Naive thymus-derived CD4-positive, alpha-beta T cell (primary cell): ENCODE measurements at regions of chr7 and their contacts with region 1.

Region 1: DNA sequence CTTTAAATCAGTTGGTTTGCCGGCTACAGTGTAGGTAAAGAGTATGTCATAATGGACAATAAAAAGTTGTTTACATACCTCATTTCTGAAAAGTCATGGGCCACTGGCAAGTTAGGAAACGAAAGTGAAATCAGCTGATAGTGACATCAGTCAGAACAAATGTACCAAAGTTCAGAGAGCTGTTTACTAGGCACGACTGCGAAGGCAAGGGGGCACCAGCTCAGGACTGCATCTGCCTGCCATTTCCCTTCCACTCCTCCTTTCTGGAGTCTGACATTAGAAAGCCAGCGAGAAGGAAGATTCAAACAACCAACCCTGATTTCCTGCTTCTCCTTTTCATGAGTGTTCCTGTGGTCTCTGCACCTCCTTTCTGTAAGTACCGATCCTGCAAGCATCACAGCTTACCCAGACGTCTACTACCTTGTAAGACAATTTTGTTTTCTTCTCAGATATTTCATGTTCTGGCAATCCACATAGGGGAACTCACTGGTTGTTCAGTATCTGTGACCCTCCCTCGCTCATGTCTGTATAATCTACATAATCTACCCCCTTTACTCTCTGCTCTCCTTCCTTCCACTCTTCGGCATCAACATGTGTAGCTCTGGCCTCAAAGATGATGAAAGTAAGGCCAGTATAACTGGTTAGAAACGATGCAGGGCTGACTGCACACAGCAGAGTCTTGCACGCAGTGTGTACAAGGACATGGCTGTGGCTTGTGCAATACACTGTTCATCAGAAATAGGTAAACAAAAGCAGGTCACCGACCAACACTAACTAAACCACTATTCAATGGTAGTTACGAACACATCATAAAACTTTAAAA is at the start of gene TMEM140:
- DNase-seq: peak in 8 of 9 donors; percentile 56 to 88 (median 80)
- ATAC-seq: peak; percentile 84
- H3K4me3 ChIP-seq: peak within 1 kb of the TSS; percentile 71
- H3K4me3 Mint-ChIP-seq: peak within 1 kb of the TSS; percentile 83 to 95 (median 92)
- H3K27ac ChIP-seq: peak within 1 kb of the TSS; percentile 90
- H3K27ac Mint-ChIP-seq: peak within 1 kb of the TSS; percentile 93 to 99 (median 97)
- H3K4me1 ChIP-seq: peaks cover 31 to 38% of the 10 kb centered on the region in 2 donors
- H3K4me1 Mint-ChIP-seq: peaks cover 41 to 74% (median 70%) of the 10 kb centered on the region in 7 donors
- H3K27me3 ChIP-seq: no peaks in the 10 kb centered on the region
- H3K27me3 Mint-ChIP-seq: no peaks in the 10 kb centered on the region
- total RNA-seq, gene TMEM140: 17.8 to 44.7 (median 20.4) TPM

Region 2: DNA sequence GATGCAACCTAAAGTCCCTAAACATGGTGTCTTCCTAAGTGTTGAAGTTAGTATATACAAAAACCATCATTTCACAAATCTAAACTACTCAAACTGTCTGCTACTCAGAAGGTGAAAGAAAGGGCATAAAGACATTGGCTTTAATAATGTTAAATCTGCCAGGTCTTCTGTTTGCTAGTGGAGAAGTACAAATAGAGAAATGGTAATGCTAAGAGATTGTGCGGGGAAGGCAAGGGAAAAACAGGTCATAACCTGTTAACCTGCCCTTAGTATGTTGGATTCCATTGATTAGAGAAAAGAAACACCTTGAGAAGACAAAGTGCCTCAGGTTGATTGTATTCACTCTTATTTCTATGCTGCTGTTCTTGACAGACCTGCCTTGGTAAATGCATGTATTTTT is 288.3 kb before region 1 on chr7:
- CTCF ChIA-PET with region 1: no interaction called
- POLR2A ChIA-PET with region 1: interaction called, 5 read pairs
- intact Hi-C with region 1: loop called in 1 of 2 experiments (anchors 5 kb)
- DNase-seq: no peak
- ATAC-seq: no peak
- H3K4me3 ChIP-seq: no peak overlapping the region
- H3K4me3 Mint-ChIP-seq: peak overlapping the region in 1 of 10 donors; percentile 9
- H3K27ac ChIP-seq: no peak overlapping the region
- H3K27ac Mint-ChIP-seq: peak overlapping the region in 6 of 9 donors; percentile 9 to 85 (median 58)
- H3K4me1 ChIP-seq: peaks cover 0 to 19% of the 10 kb centered on the region in 2 donors
- H3K4me1 Mint-ChIP-seq: peaks cover 12 to 77% (median 69%) of the 10 kb centered on the region in 7 donors
- H3K27me3 ChIP-seq: no peaks in the 10 kb centered on the region
- H3K27me3 Mint-ChIP-seq: no peaks in the 10 kb centered on the region

Region 3: GRCh38 chr7:134986363-134987251 is 161.5 kb before region 1 on chr7 and contains the start of gene AGBL3:
- CTCF ChIA-PET with region 1: interaction called, 31 read pairs
- POLR2A ChIA-PET with region 1: interaction called, 59 read pairs
- intact Hi-C with region 1: loop called (anchors 1 kb)
- DNase-seq: peak; percentile 80 to 92 (median 89)
- ATAC-seq: peak; percentile 94
- H3K4me3 ChIP-seq: peak within 1 kb of the TSS; percentile 92
- H3K4me3 Mint-ChIP-seq: peak within 1 kb of the TSS; percentile 93 to 100 (median 98)
- H3K27ac ChIP-seq: peak within 1 kb of the TSS; percentile 96
- H3K27ac Mint-ChIP-seq: peak within 1 kb of the TSS; percentile 97 to 100 (median 99)
- H3K4me1 ChIP-seq: no peaks in the 10 kb centered on the region
- H3K4me1 Mint-ChIP-seq: peaks cover 20 to 61% (median 52%) of the 10 kb centered on the region in 7 donors
- H3K27me3 ChIP-seq: no peaks in the 10 kb centered on the region
- H3K27me3 Mint-ChIP-seq: no peaks in the 10 kb centered on the region
- total RNA-seq, gene AGBL3: 2.1 to 6.6 (median 3.8) TPM

Region 4: DNA sequence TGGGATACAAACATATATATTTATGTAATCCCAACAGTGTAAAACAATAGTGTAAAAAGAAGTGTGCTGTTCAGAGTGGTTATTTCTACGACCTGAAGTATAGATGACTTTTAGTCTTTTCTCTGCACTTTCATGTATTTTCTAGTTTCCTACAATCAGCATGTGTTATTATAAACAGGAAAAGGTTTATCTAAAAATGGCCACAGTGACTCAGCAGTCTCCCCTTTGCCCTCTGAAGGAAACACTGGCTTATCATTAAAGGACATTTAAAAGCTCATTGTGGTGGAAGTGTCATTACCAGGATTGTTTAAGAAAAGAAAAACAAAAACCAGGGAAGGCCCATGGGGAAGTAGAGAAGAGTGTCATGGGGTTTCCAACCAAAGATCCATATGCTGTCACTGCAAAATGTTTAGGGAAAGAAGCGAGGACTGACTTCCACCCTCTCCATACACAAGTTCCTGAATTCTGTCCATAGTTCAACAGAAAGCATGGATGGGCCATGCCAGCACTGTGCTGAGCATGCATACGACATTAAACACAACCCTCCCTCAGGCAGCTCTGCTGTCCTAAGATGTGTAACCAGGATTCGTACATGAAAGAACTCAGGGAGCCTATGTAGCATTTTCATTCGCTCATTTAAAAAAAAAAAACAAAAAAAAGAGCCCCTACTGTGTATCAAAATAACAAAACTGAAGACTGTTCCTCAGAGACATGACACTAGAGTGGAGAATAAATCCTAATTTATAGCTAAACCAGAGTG is 12.2 kb after region 1 on chr7:
- CTCF ChIA-PET with region 1: interaction called, 4 read pairs
- POLR2A ChIA-PET with region 1: interaction called, 183 read pairs
- intact Hi-C with region 1: loop called (anchors 1 kb)
- DNase-seq: no peak
- ATAC-seq: peak; percentile 28
- H3K4me3 ChIP-seq: no peak overlapping the region
- H3K4me3 Mint-ChIP-seq: peak overlapping the region in 4 of 10 donors; percentile 6 to 47 (median 42)
- H3K27ac ChIP-seq: no peak overlapping the region
- H3K27ac Mint-ChIP-seq: peak overlapping the region; percentile 33 to 88 (median 68)
- H3K4me1 ChIP-seq: peaks cover 11 to 24% of the 10 kb centered on the region in 2 donors
- H3K4me1 Mint-ChIP-seq: peaks cover 35 to 58% (median 48%) of the 10 kb centered on the region in 7 donors
- H3K27me3 ChIP-seq: no peaks in the 10 kb centered on the region
- H3K27me3 Mint-ChIP-seq: no peaks in the 10 kb centered on the region

Region 5: GRCh38 chr7:135573541-135573940 is 425.4 kb after region 1 on chr7:
- CTCF ChIA-PET with region 1: no interaction called
- POLR2A ChIA-PET with region 1: no interaction called
- intact Hi-C with region 1: no loop called
- DNase-seq: no peak
- ATAC-seq: no peak
- H3K4me3 ChIP-seq: no peak overlapping the region
- H3K4me3 Mint-ChIP-seq: no peak overlapping the region
- H3K27ac ChIP-seq: no peak overlapping the region
- H3K27ac Mint-ChIP-seq: no peak overlapping the region
- H3K4me1 ChIP-seq: no peaks in the 10 kb centered on the region
- H3K4me1 Mint-ChIP-seq: peaks cover 11 to 26% (median 22%) of the 10 kb centered on the region in 7 donors
- H3K27me3 ChIP-seq: no peaks in the 10 kb centered on the region
- H3K27me3 Mint-ChIP-seq: no peaks in the 10 kb centered on the region